Panc1 (cell line): ENCODE measurements at regions of chr18 and their contacts with region 1.

Region 1: GRCh38 chr18:49412679-49413078 is 47.8 kb downstream of the DYM start:
- DNase-seq: no peak
- ATAC-seq: no peak
- H3K4me3 ChIP-seq: no peak overlapping the region
- H3K27ac ChIP-seq: no peak overlapping the region
- H3K4me1 ChIP-seq: no peaks in the 10 kb centered on the region
- H3K27me3 ChIP-seq: no peaks in the 10 kb centered on the region
- CTCF ChIP-seq: no peak

Region 2: GRCh38 chr18:49178736-49179135 is 233.9 kb before region 1 on chr18:
- CTCF ChIA-PET with region 1: interaction called, 10 read pairs
- POLR2A ChIA-PET with region 1: no interaction called
- in situ Hi-C with region 1: no loop called
- intact Hi-C with region 1: no loop called
- DNase-seq: no peak
- ATAC-seq: no peak
- H3K4me3 ChIP-seq: no peak overlapping the region
- H3K27ac ChIP-seq: no peak overlapping the region
- H3K4me1 ChIP-seq: no peaks in the 10 kb centered on the region; the same call in 1 of the 2 replicates
- H3K27me3 ChIP-seq: no peaks in the 10 kb centered on the region
- CTCF ChIP-seq: peak; percentile 58; the same call in 1 of the 2 replicates

Region 3: DNA sequence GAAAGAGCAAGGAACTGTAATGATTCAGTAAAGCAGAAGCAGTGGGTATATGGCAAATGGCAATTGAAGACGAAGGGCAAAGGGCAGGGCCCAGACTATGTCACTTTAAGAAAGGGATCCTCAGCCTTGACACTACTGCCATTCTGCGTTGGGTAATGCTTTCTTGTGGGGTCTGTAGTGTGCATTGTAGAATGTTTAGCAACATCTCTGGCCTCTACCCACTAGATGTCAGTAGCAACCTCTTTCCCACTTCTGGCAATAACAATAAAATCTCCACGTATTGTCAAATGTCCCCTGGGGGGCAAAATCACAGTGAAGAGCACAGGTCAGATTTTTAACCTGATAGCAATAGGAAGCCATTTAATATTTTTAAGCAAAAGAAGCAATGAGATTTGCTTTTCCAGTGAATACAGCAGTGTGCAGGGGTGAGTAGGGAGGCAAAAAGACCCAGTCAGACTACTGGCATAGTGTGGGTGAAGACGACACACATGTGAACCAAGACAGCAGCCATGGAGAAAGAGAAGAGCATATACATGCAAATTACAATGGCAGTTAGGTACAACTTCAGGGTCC is 161.8 kb before region 1 on chr18:
- CTCF ChIA-PET with region 1: no interaction called
- POLR2A ChIA-PET with region 1: no interaction called
- in situ Hi-C with region 1: no loop called
- intact Hi-C with region 1: loop called (anchors 10 kb)
- DNase-seq: no peak
- ATAC-seq: no peak; the same call in 1 of the 2 replicates
- H3K4me3 ChIP-seq: no peak overlapping the region
- H3K27ac ChIP-seq: no peak overlapping the region
- H3K4me1 ChIP-seq: no peaks in the 10 kb centered on the region
- H3K27me3 ChIP-seq: no peaks in the 10 kb centered on the region
- CTCF ChIP-seq: peak; percentile 64

Region 4: GRCh38 chr18:49447810-49448745 is 35.4 kb after region 1 on chr18:
- CTCF ChIA-PET with region 1: interaction called, 10 read pairs
- POLR2A ChIA-PET with region 1: no interaction called
- in situ Hi-C with region 1: no loop called
- intact Hi-C with region 1: no loop called
- DNase-seq: no peak
- ATAC-seq: peak; percentile 94
- H3K4me3 ChIP-seq: no peak overlapping the region
- H3K27ac ChIP-seq: no peak overlapping the region
- H3K4me1 ChIP-seq: no peaks in the 10 kb centered on the region
- H3K27me3 ChIP-seq: no peaks in the 10 kb centered on the region
- CTCF ChIP-seq: peak; percentile 58